ENCODE measurements at regions of chr15 and their contacts with region 1.

Region 1: GRCh38 chr15:40694688-40695468 is at the start of gene RAD51:
- DNase-seq: peak; percentile 96
- H3K4me3 Mint-ChIP-seq: peak within 1 kb of the TSS; percentile 99
- H3K27ac Mint-ChIP-seq: peak within 1 kb of the TSS; percentile 99
- H3K4me1 Mint-ChIP-seq: peaks cover 25% of the 10 kb centered on the region
- H3K27me3 Mint-ChIP-seq: no peaks in the 10 kb centered on the region
- total RNA-seq, gene RAD51: 65.8 to 68.8 TPM

Region 2: DNA sequence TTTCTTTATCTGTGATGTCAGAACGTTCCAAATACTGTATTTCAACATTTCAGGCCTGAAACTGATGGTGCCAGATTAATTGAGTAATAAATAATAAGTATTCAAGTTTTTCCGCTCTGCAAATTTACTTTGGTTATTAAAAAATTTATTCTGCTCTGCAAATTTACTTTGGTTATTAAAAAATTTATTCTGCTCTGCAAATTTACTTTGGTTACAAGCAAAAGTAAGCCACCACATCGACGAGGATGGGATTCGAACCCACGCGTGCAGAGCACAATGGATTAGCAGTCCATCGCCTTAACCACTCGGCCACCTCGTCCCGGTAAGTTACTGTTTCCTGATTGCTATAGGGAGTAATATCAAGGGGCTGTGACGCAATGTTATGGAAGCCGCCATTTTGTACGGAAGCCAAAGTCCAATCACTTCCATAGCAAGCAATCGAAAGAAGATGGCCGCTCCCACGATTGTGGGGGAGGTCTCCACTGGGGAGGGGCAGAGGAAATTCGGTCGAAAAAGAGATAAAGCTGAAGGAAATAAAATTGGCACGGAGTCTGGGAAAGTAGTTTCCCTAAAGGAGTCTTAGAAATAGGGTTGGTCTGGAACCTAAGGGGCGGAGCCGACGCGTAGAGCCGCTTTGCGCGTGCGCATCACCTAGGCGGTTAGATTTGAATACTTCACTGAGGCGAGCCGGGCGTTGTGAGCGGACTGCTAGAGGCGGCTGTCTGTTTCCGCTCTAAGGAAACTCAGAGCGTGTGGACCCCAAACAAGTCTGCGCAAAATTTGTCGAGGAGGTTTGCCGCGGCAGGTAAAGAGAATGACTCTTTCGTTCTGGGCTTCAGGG is 101.1 kb before region 1 on chr15 and contains the start of gene KNL1:
- CTCF ChIA-PET with region 1: no interaction called
- intact Hi-C with region 1: loop called (anchors 1 kb)
- DNase-seq: peak; percentile 95
- H3K4me3 Mint-ChIP-seq: peak within 1 kb of the TSS; percentile 97
- H3K27ac Mint-ChIP-seq: peak within 1 kb of the TSS; percentile 99
- H3K4me1 Mint-ChIP-seq: peaks cover 23% of the 10 kb centered on the region
- H3K27me3 Mint-ChIP-seq: peaks cover 5% of the 10 kb centered on the region
- total RNA-seq, gene KNL1: 31.0 to 32.7 TPM

Region 3: DNA sequence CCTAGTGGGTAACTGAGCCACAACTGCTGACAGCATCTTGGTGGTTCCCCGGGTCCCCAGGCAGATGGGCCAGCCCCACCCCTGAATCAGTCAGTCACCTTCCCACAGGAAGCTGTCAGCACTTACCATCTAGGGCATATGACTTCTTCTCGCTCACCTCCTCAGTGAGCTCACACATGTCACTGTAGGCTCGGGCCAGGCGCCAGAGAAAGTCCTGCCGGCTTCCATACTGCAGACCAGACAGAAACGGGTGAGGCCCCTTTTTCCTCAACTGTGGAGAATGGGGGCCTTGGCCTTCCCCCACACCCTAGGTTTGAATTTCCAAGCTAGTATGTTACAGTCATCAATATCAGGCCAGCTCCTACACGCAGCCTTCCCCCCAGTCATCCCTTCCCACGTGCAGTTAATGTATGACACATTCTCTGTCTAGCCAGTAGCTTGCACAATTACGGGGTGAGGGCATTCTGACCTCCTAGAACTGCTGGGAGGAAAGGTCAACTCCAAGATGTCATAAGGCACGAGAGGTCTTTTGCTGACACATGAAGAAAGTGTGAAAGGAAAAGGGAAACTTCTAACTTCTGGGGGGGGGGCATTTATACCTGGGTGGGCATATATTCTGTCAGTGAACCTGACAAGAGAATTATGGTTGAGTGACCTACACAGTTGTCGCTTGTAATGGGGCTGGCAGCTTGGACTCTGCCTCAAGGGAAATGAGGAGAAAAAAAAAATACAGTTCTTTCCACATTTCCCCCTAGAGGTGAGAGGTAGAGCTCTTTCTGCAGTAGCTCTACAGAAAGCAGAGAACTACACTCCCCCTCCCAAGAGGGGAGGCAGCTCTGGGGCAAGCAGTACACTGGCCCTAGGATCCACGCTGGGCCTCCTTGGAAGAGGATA is 49.3 kb after region 1 on chr15:
- CTCF ChIA-PET with region 1: interaction called, 3 read pairs
- intact Hi-C with region 1: loop called (anchors 2 kb)
- DNase-seq: peak; percentile 81
- H3K4me3 Mint-ChIP-seq: no peak overlapping the region
- H3K27ac Mint-ChIP-seq: peak overlapping the region; percentile 48
- H3K4me1 Mint-ChIP-seq: peaks cover 15% of the 10 kb centered on the region
- H3K27me3 Mint-ChIP-seq: no peaks in the 10 kb centered on the region

Region 4: GRCh38 chr15:40763801-40764732 is 69.2 kb after region 1 on chr15 and contains the start of gene GCHFR:
- CTCF ChIA-PET with region 1: no interaction called
- intact Hi-C with region 1: loop called (anchors 1 kb)
- DNase-seq: peak; percentile 75
- H3K4me3 Mint-ChIP-seq: peak within 1 kb of the TSS; percentile 83
- H3K27ac Mint-ChIP-seq: peak within 1 kb of the TSS; percentile 70
- H3K4me1 Mint-ChIP-seq: peaks cover 37% of the 10 kb centered on the region
- H3K27me3 Mint-ChIP-seq: no peaks in the 10 kb centered on the region
- total RNA-seq, gene GCHFR: 28.1 to 32.7 TPM

Region 5: DNA sequence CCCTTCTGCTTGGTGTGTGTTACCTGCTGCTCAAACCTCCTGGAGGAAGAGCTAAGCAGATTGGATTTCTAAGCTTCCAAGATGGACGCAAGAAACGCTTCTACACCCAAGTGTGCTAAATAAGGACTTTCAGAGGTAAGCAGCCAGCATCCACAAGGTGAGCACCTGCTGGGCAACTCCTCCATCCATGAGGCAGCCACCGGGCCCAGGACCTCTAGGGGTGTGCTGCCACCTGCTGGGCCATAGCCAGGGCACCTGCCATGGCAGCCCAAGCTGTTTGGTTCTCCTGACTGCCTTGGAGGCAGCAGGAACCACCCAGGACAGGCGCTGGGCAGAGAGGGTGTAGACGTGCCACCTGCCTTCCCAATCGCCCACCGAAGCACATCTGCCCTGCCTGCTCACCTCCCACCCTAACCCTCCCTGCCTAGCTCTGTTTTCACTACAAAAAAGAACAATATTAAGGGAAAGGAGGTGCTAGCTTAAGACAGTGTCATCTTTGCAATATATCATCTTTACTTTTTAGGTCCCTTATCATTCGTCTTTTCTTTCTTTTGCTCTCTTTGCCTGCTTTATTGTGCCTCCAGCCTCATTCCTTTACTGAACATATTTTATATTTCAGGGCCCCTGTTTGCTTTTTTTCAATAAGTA is 87.8 kb after region 1 on chr15:
- CTCF ChIA-PET with region 1: interaction called, 15 read pairs
- intact Hi-C with region 1: loop called (anchors 5 kb)
- DNase-seq: peak; percentile 88
- H3K4me3 Mint-ChIP-seq: no peak overlapping the region
- H3K27ac Mint-ChIP-seq: no peak overlapping the region
- H3K4me1 Mint-ChIP-seq: peaks cover 18% of the 10 kb centered on the region
- H3K27me3 Mint-ChIP-seq: no peaks in the 10 kb centered on the region

Region 6: GRCh38 chr15:41230650-41231533 is 536.0 kb after region 1 on chr15 and contains the starts of genes CHP1 and EXD1:
- CTCF ChIA-PET with region 1: no interaction called
- intact Hi-C with region 1: loop called (anchors 1 kb)
- DNase-seq: peak; percentile 98
- H3K4me3 Mint-ChIP-seq: peak within 1 kb of the TSS; percentile 88
- H3K27ac Mint-ChIP-seq: peak within 1 kb of the TSS; percentile 87
- H3K4me1 Mint-ChIP-seq: peaks cover 22% of the 10 kb centered on the region
- H3K27me3 Mint-ChIP-seq: no peaks in the 10 kb centered on the region
- total RNA-seq, gene CHP1: 37.7 to 39.8 TPM
- total RNA-seq, gene EXD1: not detected